ENCODE measurements at regions of chr1 and their contacts with region 1.

Region 1: DNA sequence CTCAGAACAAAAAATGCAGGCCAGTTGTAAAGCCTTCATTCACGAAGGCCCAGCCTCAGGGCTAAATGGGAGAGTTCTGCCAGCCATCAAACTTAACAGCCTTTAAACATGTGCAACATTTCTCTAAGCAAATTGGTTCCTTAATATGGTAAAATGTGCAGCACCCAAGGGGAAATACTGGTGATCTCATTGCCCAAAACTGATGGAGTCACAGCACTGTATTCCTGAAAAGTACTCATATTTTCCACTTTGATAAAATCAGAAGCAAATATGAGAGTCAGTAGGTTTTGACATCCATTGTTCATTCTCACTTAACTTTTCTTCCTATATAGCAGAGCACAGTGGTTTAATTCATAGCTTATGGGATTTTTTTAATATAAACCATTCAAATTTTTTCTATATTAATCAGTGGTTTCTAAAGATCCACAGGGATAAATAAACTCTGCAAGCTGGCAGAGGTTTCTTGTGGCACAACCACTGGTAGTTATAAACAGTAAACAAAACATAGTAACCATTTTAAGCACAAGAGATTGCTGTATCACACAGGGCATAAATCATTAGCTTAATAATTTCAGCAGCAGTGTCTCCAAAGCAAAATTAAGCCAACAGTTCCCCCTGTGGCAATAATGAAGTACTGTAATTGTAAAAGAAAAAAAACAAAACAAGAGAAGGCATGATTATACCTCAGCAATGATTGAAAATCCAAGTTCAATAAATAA is 106.9 kb upstream of the LYPLAL1 start:
- DNase-seq: peak; percentile 59
- ATAC-seq: peak; percentile 79
- H3K4me3 ChIP-seq: no peak overlapping the region
- H3K27ac ChIP-seq: peak overlapping the region; percentile 26; the same call in 1 of the 2 replicates
- H3K4me1 ChIP-seq: peaks cover 2% of the 10 kb centered on the region
- H3K27me3 ChIP-seq: no peaks in the 10 kb centered on the region
- CTCF ChIP-seq: peak; percentile 74
- POLR2A ChIP-seq: no peak
- RAD21 ChIP-seq: peak; percentile 85

Region 2: DNA sequence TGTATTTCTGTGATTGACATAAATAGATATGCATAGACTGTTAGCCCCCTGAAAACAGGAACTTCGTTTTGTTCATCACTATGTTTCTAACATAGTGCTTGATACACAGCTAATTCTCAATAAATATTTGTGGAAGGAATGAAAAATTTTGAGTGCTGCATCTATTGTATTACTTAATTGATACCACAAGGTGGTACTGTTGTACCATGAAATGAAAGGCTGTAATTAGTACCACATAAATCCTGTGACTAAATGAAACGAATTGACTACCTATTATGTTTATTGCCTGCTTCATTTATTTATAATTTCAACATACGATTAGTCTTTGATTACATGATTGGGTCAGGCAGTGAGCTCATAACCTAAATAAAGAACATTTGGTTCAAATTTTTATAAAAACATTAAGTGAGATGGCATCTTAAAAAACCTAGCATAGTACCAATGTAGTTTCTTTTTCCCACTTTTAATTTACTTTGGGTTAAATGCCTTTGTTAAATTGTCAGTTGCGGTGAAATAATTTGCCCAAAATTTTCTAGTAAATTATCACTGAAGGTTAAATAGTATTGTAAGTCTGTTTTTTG is 736.7 kb before region 1 on chr1:
- CTCF ChIA-PET with region 1: interaction called, 4 read pairs
- POLR2A ChIA-PET with region 1: no interaction called
- dilution Hi-C with region 1: no loop called
- in situ Hi-C with region 1: no loop called
- intact Hi-C with region 1: loop called (anchors 1 kb)
- DNase-seq: peak; percentile 61
- ATAC-seq: peak; percentile 74
- H3K4me3 ChIP-seq: no peak overlapping the region
- H3K27ac ChIP-seq: no peak overlapping the region
- H3K4me1 ChIP-seq: peaks cover 2% of the 10 kb centered on the region; the same call in 1 of the 2 replicates
- H3K27me3 ChIP-seq: no peaks in the 10 kb centered on the region
- CTCF ChIP-seq: peak; percentile 78
- POLR2A ChIP-seq: no peak
- RAD21 ChIP-seq: peak; percentile 92

Region 3: DNA sequence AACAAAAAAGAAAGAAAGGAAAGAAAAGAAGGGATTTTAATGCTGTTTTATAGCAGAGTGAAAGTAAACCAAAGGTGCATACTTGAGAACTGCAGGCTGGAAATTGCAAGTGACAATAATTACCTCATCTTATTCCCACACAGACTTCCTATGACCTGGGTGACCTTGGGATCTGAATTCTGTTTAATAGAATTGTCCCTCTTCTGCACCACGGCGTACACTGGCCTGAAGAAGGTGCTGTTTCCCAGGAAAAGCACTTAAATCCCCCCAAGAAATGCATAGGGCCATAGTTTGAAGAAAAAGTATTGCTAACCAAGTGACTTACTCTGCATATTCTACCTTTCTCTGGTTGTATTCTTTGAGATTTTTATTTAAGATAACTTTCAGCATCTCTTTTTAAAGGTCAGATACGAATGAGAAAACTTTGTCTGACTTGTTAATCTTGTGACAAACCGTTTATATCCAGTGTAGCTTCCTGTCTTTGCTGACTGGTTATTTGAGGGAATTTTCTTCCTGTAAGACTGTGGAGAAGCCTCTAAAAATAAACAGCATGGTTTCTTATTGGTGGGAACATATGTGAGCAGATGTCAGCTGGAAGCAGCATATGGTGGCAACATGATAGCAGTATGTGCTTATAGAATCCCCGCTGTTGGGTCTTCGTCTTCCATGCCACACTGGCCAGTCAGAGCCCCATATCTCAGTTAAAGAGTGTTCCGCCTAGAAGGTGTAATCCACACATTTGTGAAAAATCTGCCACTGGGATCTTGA is 705.3 kb before region 1 on chr1:
- CTCF ChIA-PET with region 1: interaction called, 4 read pairs
- POLR2A ChIA-PET with region 1: no interaction called
- dilution Hi-C with region 1: no loop called
- in situ Hi-C with region 1: no loop called
- intact Hi-C with region 1: loop called (anchors 1 kb)
- DNase-seq: peak; percentile 80
- ATAC-seq: peak; percentile 59; the same call in 1 of the 2 replicates
- H3K4me3 ChIP-seq: no peak overlapping the region
- H3K27ac ChIP-seq: no peak overlapping the region
- H3K4me1 ChIP-seq: peaks cover 23% of the 10 kb centered on the region
- H3K27me3 ChIP-seq: no peaks in the 10 kb centered on the region
- CTCF ChIP-seq: peak; percentile 83
- POLR2A ChIP-seq: 0 out of 2 replicates have a peak, but pooled peaks have one; percentile 48
- RAD21 ChIP-seq: peak; percentile 93

Region 4: GRCh38 chr1:218521375-218522169 is 545.2 kb before region 1 on chr1:
- CTCF ChIA-PET with region 1: no interaction called
- POLR2A ChIA-PET with region 1: no interaction called
- dilution Hi-C with region 1: no loop called
- in situ Hi-C with region 1: no loop called
- intact Hi-C with region 1: loop called (anchors 5 kb)
- DNase-seq: peak; percentile 21
- ATAC-seq: no peak
- H3K4me3 ChIP-seq: no peak overlapping the region
- H3K27ac ChIP-seq: no peak overlapping the region
- H3K4me1 ChIP-seq: peaks cover 3% of the 10 kb centered on the region; the same call in 1 of the 2 replicates
- H3K27me3 ChIP-seq: no peaks in the 10 kb centered on the region
- CTCF ChIP-seq: peak; percentile 48
- POLR2A ChIP-seq: no peak
- RAD21 ChIP-seq: peak; percentile 54

Region 5: GRCh38 chr1:218878369-218878768 is 188.4 kb before region 1 on chr1:
- CTCF ChIA-PET with region 1: no interaction called
- POLR2A ChIA-PET with region 1: no interaction called
- dilution Hi-C with region 1: no loop called
- in situ Hi-C with region 1: no loop called
- intact Hi-C with region 1: loop called (anchors 5 kb)
- DNase-seq: peak; percentile 68
- ATAC-seq: peak; percentile 42
- H3K4me3 ChIP-seq: no peak overlapping the region
- H3K27ac ChIP-seq: no peak overlapping the region
- H3K4me1 ChIP-seq: no peaks in the 10 kb centered on the region; the same call in 1 of the 2 replicates
- H3K27me3 ChIP-seq: no peaks in the 10 kb centered on the region
- CTCF ChIP-seq: no peak
- POLR2A ChIP-seq: no peak
- RAD21 ChIP-seq: no peak

Region 6: GRCh38 chr1:219329578-219329977 is 262.8 kb after region 1 on chr1:
- CTCF ChIA-PET with region 1: no interaction called
- POLR2A ChIA-PET with region 1: no interaction called
- dilution Hi-C with region 1: no loop called
- in situ Hi-C with region 1: no loop called
- intact Hi-C with region 1: no loop called
- DNase-seq: peak; percentile 82
- ATAC-seq: peak; percentile 12; the same call in 1 of the 2 replicates
- H3K4me3 ChIP-seq: no peak overlapping the region
- H3K27ac ChIP-seq: no peak overlapping the region
- H3K4me1 ChIP-seq: peaks cover 3% of the 10 kb centered on the region
- H3K27me3 ChIP-seq: no peaks in the 10 kb centered on the region
- CTCF ChIP-seq: no peak
- POLR2A ChIP-seq: no peak
- RAD21 ChIP-seq: no peak

Region 7: GRCh38 chr1:219699870-219700269 is 633.1 kb after region 1 on chr1:
- CTCF ChIA-PET with region 1: no interaction called
- POLR2A ChIA-PET with region 1: no interaction called
- dilution Hi-C with region 1: no loop called
- in situ Hi-C with region 1: no loop called
- intact Hi-C with region 1: no loop called
- DNase-seq: peak; percentile 74
- ATAC-seq: peak; percentile 42; the same call in 1 of the 2 replicates
- H3K4me3 ChIP-seq: no peak overlapping the region
- H3K27ac ChIP-seq: no peak overlapping the region
- H3K4me1 ChIP-seq: no peaks in the 10 kb centered on the region
- H3K27me3 ChIP-seq: no peaks in the 10 kb centered on the region
- CTCF ChIP-seq: no peak
- POLR2A ChIP-seq: no peak
- RAD21 ChIP-seq: no peak

Region 8: DNA sequence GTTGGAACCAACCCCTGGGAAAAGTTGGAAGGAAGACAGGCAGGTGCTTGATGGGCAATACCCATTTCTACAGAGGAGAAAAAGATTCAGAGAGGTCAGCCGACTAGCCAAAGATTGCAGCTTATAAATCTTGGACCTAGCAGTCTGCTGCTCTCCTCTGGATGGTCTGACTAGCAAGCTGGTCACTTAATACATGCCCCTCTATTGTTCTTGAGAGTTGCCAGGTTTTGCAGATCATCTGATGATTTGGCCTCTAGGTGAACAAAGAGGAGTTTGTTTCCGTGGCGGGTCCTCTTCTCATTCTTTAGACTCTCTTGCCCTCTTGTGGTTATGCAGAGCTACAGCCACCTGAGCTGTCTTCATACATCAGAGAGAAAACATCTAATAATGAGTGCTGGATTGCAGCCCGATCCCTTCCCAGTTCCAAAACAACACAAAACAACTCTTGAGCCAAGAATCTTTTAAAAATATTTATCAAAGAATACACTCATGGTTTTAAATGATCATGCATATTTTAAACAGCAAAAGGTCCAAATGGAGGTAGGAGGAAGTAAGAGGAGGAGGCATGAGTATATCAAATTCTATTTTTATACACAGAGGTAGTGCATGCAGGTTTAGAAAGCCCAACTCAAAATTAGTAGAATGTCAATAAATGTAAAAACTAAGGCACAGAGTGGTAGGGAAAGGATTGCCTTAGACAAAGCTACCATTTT is 745.9 kb after region 1 on chr1:
- CTCF ChIA-PET with region 1: no interaction called
- POLR2A ChIA-PET with region 1: no interaction called
- dilution Hi-C with region 1: no loop called
- in situ Hi-C with region 1: no loop called
- intact Hi-C with region 1: loop called (anchors 5 kb)
- DNase-seq: peak; percentile 71
- ATAC-seq: peak; percentile 95
- H3K4me3 ChIP-seq: no peak overlapping the region
- H3K27ac ChIP-seq: no peak overlapping the region
- H3K4me1 ChIP-seq: peaks cover 2% of the 10 kb centered on the region; the same call in 1 of the 2 replicates
- H3K27me3 ChIP-seq: peaks cover 7% of the 10 kb centered on the region
- CTCF ChIP-seq: peak; percentile 81
- POLR2A ChIP-seq: 0 out of 2 replicates have a peak, but pooled peaks have one; percentile 25
- RAD21 ChIP-seq: peak; percentile 84